ENCODE measurements at regions of chr3 and their contacts with region 1.

Region 1: GRCh38 chr3:17195856-17196604 is 311.3 kb downstream of the PLCL2 start:
- DNase-seq: no peak
- H3K4me3 ChIP-seq: no peak overlapping the region
- H3K27ac ChIP-seq: no peak overlapping the region
- H3K4me1 ChIP-seq: peaks cover 0 to 2% (median 0%) of the 10 kb centered on the region in 4 experiments; a peak in 2 of 7 replicates
- H3K27me3 ChIP-seq: no peaks in the 10 kb centered on the region
- CTCF ChIP-seq: peak in 2 of 3 experiments; percentile 10 to 37; a peak in 2 of 4 replicates
- EP300 ChIP-seq: no peak
- POLR2A ChIP-seq: no peak
- RAD21 ChIP-seq: peak; percentile 56 to 62

Region 2: DNA sequence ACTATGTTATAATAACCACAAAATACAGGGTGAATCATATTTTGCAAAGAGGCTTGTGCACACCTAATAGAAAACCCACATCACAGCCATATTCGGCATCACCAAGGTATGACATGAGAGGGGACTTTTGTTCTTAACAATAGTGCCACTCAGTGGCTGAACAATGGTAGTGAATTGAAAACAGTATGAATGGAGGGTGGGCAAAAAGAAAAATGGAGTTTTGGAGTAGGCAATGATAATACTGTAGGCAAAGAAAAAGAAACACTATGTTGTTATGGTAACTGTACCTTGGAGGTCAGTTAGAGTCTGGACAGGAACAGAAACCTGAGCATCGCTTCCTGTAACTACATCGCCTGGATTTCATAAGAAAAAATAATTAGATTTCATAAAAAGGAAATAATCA is 37.4 kb after region 1 on chr3:
- CTCF ChIA-PET with region 1: interaction called, 14 read pairs
- POLR2A ChIA-PET with region 1: no interaction called
- DNase-seq: no peak
- H3K4me3 ChIP-seq: no peak overlapping the region
- H3K27ac ChIP-seq: no peak overlapping the region
- H3K4me1 ChIP-seq: no peaks in the 10 kb centered on the region
- H3K27me3 ChIP-seq: no peaks in the 10 kb centered on the region
- CTCF ChIP-seq: peak in 2 of 3 experiments; percentile 63 to 64; a peak in 3 of 4 replicates
- EP300 ChIP-seq: no peak
- POLR2A ChIP-seq: no peak
- RAD21 ChIP-seq: peak; percentile 95